MCF 10A (cell line): ENCODE measurements at regions of chr15 and their contacts with region 1.

Region 1: DNA sequence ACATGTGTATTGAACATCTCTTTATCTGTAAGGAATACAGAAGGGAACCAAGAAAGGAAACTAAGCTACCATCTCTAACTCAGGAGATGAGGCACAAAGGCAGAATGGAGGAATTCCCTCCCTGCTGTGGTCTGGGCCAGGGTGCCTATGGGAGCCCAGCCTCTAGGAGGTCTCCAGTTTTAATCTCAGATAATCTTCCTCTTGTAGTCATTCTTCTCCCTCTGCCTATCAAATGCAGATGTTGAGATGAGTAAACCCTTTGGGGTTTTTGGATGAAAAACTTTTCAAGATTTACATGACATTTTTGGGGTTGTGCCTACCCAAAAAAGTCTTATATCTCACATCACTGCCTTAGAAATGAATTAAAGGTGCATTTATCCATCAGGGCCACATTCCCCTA is 23.3 kb downstream of the SCG5 start:
- DNase-seq: no peak
- H3K4me3 Mint-ChIP-seq: no peak overlapping the region
- H3K27ac Mint-ChIP-seq: no peak overlapping the region
- H3K4me1 Mint-ChIP-seq: peaks cover 9% of the 10 kb centered on the region
- H3K27me3 Mint-ChIP-seq: no peaks in the 10 kb centered on the region
- CTCF ChIP-seq: no peak

Region 2: GRCh38 chr15:32651229-32651837 is 13.5 kb before region 1 on chr15:
- CTCF ChIA-PET with region 1: interaction called, 31 read pairs
- POLR2A ChIA-PET with region 1: no interaction called
- intact Hi-C with region 1: no loop called
- DNase-seq: peak; percentile 70
- H3K4me3 Mint-ChIP-seq: no peak overlapping the region
- H3K27ac Mint-ChIP-seq: no peak overlapping the region
- H3K4me1 Mint-ChIP-seq: peaks cover 12% of the 10 kb centered on the region
- H3K27me3 Mint-ChIP-seq: no peaks in the 10 kb centered on the region
- CTCF ChIP-seq: peak; percentile 88

Region 3: GRCh38 chr15:32781781-32782180 is 117.0 kb after region 1 on chr15:
- CTCF ChIA-PET with region 1: no interaction called
- POLR2A ChIA-PET with region 1: no interaction called
- intact Hi-C with region 1: no loop called
- DNase-seq: no peak
- H3K4me3 Mint-ChIP-seq: no peak overlapping the region
- H3K27ac Mint-ChIP-seq: no peak overlapping the region
- H3K4me1 Mint-ChIP-seq: no peaks in the 10 kb centered on the region
- H3K27me3 Mint-ChIP-seq: no peaks in the 10 kb centered on the region
- CTCF ChIP-seq: no peak

Region 4: DNA sequence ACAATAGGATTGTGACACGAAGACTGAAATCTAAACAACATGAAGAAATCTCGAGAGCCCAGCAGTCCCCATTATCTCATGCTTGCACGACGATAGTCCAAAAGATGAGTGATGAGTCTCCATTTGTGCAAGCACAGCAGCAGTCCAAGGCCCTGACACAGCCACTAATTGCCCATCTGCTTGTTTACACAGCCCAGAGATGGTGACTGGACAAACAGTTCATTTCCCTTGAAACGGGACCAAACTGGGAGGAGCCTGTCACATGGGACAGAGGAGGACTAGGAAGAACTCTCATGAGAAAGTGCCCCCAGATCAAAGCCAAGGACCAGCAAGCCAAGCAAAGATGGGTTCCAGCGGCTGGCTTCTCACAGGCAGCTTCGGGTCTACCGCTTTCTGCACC is 174.0 kb after region 1 on chr15:
- CTCF ChIA-PET with region 1: interaction called, 63 read pairs
- POLR2A ChIA-PET with region 1: no interaction called
- intact Hi-C with region 1: loop called (anchors 2 kb)
- DNase-seq: peak; percentile 77
- H3K4me3 Mint-ChIP-seq: no peak overlapping the region
- H3K27ac Mint-ChIP-seq: no peak overlapping the region
- H3K4me1 Mint-ChIP-seq: no peaks in the 10 kb centered on the region
- H3K27me3 Mint-ChIP-seq: no peaks in the 10 kb centered on the region
- CTCF ChIP-seq: no peak

Region 5: GRCh38 chr15:32987067-32987466 is 322.3 kb after region 1 on chr15:
- CTCF ChIA-PET with region 1: interaction called, 21 read pairs
- POLR2A ChIA-PET with region 1: no interaction called
- intact Hi-C with region 1: no loop called
- DNase-seq: no peak
- H3K4me3 Mint-ChIP-seq: no peak overlapping the region
- H3K27ac Mint-ChIP-seq: no peak overlapping the region
- H3K4me1 Mint-ChIP-seq: no peaks in the 10 kb centered on the region
- H3K27me3 Mint-ChIP-seq: no peaks in the 10 kb centered on the region
- CTCF ChIP-seq: no peak

Region 6: DNA sequence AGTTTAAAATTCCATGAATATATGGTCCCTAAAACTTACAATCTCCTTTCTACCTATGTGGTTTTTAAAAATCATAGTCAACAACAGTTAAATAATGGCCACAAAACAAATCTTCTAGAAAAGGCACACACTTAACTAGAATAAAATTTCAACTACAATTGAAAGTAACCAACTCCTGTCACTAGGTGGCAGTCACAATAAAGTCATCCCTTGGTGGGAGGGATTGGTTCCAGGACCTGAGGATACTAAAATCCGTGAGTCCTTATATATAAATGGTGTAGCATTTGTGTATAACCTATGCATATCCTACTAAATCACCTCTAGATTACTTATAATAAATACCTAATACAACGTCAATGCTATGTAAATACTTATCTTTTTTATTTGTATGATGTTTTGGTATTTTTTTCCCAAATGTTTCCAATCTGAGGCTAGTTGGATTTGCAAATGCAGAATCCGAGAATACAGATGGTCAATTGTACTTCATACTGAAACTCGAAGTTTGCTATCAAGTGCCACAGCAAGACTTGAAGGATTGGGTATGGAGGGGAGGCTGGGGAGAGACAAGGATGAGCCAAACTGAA is 357.1 kb after region 1 on chr15:
- CTCF ChIA-PET with region 1: interaction called, 12 read pairs
- POLR2A ChIA-PET with region 1: no interaction called
- intact Hi-C with region 1: no loop called
- DNase-seq: peak; percentile 76
- H3K4me3 Mint-ChIP-seq: no peak overlapping the region
- H3K27ac Mint-ChIP-seq: peak overlapping the region; percentile 85
- H3K4me1 Mint-ChIP-seq: peaks cover 10% of the 10 kb centered on the region
- H3K27me3 Mint-ChIP-seq: no peaks in the 10 kb centered on the region
- CTCF ChIP-seq: peak; percentile 43